ENCODE measurements at regions of chr6 and their contacts with region 1.

Region 1: GRCh38 chr6:13664703-13665352 is 46.8 kb downstream of the RANBP9 start:
- DNase-seq: no peak
- H3K4me3 Mint-ChIP-seq: no peak overlapping the region
- H3K27ac Mint-ChIP-seq: no peak overlapping the region
- H3K4me1 Mint-ChIP-seq: peaks cover 8% of the 10 kb centered on the region
- H3K27me3 Mint-ChIP-seq: no peaks in the 10 kb centered on the region
- CTCF ChIP-seq: no peak

Region 2: DNA sequence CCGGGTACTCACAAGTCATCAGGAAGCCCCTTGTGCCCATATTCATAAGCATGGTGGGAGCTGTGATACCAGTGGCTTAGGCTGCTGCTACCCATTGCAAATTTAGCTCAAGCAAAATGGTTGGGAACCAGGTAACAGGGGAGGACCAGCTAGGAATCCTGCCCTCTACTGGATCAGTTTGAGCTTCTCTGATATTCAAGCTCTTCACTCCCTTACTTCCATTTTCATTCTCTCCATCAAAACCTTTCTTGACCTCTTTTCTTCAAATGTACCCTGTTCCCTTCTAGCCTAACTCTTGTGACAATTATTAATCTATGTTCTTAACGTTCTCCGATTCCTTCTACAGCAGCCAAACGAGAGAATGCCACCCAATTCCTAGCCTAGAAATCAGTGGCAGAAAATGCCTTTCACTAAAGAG is 39.9 kb before region 1 on chr6:
- CTCF ChIA-PET with region 1: no interaction called
- intact Hi-C with region 1: no loop called
- DNase-seq: peak; percentile 12
- H3K4me3 Mint-ChIP-seq: no peak overlapping the region
- H3K27ac Mint-ChIP-seq: no peak overlapping the region
- H3K4me1 Mint-ChIP-seq: no peaks in the 10 kb centered on the region
- H3K27me3 Mint-ChIP-seq: no peaks in the 10 kb centered on the region
- CTCF ChIP-seq: no peak

Region 3: GRCh38 chr6:13709689-13710551 is 45.1 kb after region 1 on chr6:
- CTCF ChIA-PET with region 1: no interaction called
- intact Hi-C with region 1: loop called (anchors 5 kb)
- DNase-seq: no peak
- H3K4me3 Mint-ChIP-seq: peak overlapping the region; percentile 87
- H3K27ac Mint-ChIP-seq: peak overlapping the region; percentile 74
- H3K4me1 Mint-ChIP-seq: peaks cover 13% of the 10 kb centered on the region
- H3K27me3 Mint-ChIP-seq: no peaks in the 10 kb centered on the region
- CTCF ChIP-seq: no peak

Measured in Calu3 (cell line).